Activated CD8-positive, alpha-beta T cell treated with anti-CD3 and anti-CD28 coated beads for 36 hours (primary cell): ENCODE measurements at regions of chr2 and their contacts with region 1.

Region 1: GRCh38 chr2:169109502-169110409 is 40.4 kb downstream of the DHRS9 start:
- DNase-seq: peak; percentile 83
- ATAC-seq: no peak
- H3K4me3 Mint-ChIP-seq: no peak overlapping the region
- H3K27ac Mint-ChIP-seq: no peak overlapping the region
- H3K4me1 Mint-ChIP-seq: peaks cover 48% of the 10 kb centered on the region
- H3K27me3 Mint-ChIP-seq: peaks cover 4% of the 10 kb centered on the region
- CTCF ChIP-seq: peak; percentile 97

Region 2: GRCh38 chr2:168976034-168976654 is 133.6 kb before region 1 on chr2:
- CTCF ChIA-PET with region 1: interaction called, 25 read pairs
- POLR2A ChIA-PET with region 1: no interaction called
- intact Hi-C with region 1: no loop called
- DNase-seq: peak; percentile 7
- ATAC-seq: peak; percentile 50
- H3K4me3 Mint-ChIP-seq: no peak overlapping the region
- H3K27ac Mint-ChIP-seq: no peak overlapping the region
- H3K4me1 Mint-ChIP-seq: no peaks in the 10 kb centered on the region
- H3K27me3 Mint-ChIP-seq: no peaks in the 10 kb centered on the region
- CTCF ChIP-seq: no peak

Region 3: GRCh38 chr2:169095621-169096105 is 14.1 kb before region 1 on chr2:
- CTCF ChIA-PET with region 1: interaction called, 60 read pairs
- POLR2A ChIA-PET with region 1: no interaction called
- intact Hi-C with region 1: no loop called
- DNase-seq: peak; percentile 20
- ATAC-seq: peak; percentile 61
- H3K4me3 Mint-ChIP-seq: no peak overlapping the region
- H3K27ac Mint-ChIP-seq: no peak overlapping the region
- H3K4me1 Mint-ChIP-seq: peaks cover 13% of the 10 kb centered on the region
- H3K27me3 Mint-ChIP-seq: no peaks in the 10 kb centered on the region
- CTCF ChIP-seq: no peak

Region 4: GRCh38 chr2:169141713-169142352 is 32.1 kb after region 1 on chr2:
- CTCF ChIA-PET with region 1: interaction called, 129 read pairs
- POLR2A ChIA-PET with region 1: interaction called, 3 read pairs
- intact Hi-C with region 1: no loop called
- DNase-seq: peak; percentile 74
- ATAC-seq: peak; percentile 79
- H3K4me3 Mint-ChIP-seq: no peak overlapping the region
- H3K27ac Mint-ChIP-seq: no peak overlapping the region
- H3K4me1 Mint-ChIP-seq: no peaks in the 10 kb centered on the region
- H3K27me3 Mint-ChIP-seq: no peaks in the 10 kb centered on the region
- CTCF ChIP-seq: peak; percentile 88

Region 5: DNA sequence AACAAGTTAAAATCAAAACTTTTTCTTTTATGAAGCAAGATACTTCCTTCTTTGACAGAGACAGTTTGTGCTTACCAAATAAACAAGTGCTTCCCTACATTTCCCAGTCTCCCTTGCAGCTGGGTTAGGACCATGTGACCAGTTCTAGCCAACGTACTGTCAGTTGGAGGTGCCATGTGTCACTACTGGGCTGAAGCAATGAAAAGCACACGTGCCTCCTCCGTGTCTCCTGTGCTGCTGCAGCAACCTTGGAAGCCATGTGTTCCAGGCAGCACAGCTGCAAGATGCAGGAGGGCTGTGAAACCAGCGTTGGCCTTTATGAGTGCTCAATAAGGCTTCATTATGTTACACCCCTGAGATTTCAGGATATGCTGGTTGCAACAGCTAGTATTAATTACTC is 52.9 kb after region 1 on chr2:
- CTCF ChIA-PET with region 1: no interaction called
- POLR2A ChIA-PET with region 1: no interaction called
- intact Hi-C with region 1: no loop called
- DNase-seq: no peak
- ATAC-seq: no peak
- H3K4me3 Mint-ChIP-seq: no peak overlapping the region
- H3K27ac Mint-ChIP-seq: no peak overlapping the region
- H3K4me1 Mint-ChIP-seq: no peaks in the 10 kb centered on the region
- H3K27me3 Mint-ChIP-seq: peaks cover 11% of the 10 kb centered on the region
- CTCF ChIP-seq: no peak

Region 6: DNA sequence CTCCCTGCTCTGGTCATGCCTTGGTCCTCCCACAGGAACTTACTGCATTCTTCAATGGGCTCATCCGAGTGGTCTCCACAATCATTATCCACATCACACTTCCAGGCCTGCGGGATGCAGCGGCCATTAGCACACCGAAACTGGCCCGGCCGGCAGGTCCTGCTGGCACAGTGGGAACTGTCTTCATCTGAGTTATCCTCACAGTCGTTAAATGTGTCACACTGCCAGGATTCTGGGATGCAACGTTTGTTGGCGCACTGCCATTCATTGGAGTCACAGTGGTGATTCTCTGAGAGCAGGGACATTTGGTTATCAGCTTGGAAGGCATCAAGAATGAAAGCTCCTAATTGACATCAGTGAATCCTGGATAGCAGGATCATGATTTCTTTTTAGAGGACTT is 64.1 kb after region 1 on chr2:
- CTCF ChIA-PET with region 1: no interaction called
- POLR2A ChIA-PET with region 1: no interaction called
- intact Hi-C with region 1: no loop called
- DNase-seq: no peak
- ATAC-seq: no peak
- H3K4me3 Mint-ChIP-seq: no peak overlapping the region
- H3K27ac Mint-ChIP-seq: no peak overlapping the region
- H3K4me1 Mint-ChIP-seq: no peaks in the 10 kb centered on the region
- H3K27me3 Mint-ChIP-seq: peaks cover 11% of the 10 kb centered on the region
- CTCF ChIP-seq: no peak

Region 7: DNA sequence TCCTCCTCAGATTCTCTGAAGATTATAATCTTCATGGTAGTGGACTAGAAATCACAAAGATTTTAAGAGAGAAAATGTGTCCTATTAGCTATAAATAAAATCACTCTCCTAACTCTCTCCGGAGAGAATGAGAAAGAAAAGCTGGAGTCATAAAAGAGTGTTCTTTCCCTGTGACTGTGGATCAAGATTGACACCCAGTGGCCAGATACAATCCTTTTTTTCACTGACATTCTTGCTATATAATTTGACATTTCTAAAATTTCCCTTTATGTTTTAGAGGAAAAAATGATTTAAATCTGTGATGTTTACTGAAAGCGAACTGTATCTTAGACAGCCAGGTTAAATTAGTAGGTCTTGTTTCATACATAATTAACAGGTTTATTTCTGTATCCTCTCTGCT is 287.9 kb after region 1 on chr2:
- CTCF ChIA-PET with region 1: interaction called, 12 read pairs
- POLR2A ChIA-PET with region 1: no interaction called
- intact Hi-C with region 1: no loop called
- DNase-seq: no peak
- ATAC-seq: no peak
- H3K4me3 Mint-ChIP-seq: no peak overlapping the region
- H3K27ac Mint-ChIP-seq: no peak overlapping the region
- H3K4me1 Mint-ChIP-seq: peaks cover 3% of the 10 kb centered on the region
- H3K27me3 Mint-ChIP-seq: peaks cover 13% of the 10 kb centered on the region
- CTCF ChIP-seq: peak; percentile 33